ENCODE measurements at regions of chr17 and their contacts with region 1.

Region 1: DNA sequence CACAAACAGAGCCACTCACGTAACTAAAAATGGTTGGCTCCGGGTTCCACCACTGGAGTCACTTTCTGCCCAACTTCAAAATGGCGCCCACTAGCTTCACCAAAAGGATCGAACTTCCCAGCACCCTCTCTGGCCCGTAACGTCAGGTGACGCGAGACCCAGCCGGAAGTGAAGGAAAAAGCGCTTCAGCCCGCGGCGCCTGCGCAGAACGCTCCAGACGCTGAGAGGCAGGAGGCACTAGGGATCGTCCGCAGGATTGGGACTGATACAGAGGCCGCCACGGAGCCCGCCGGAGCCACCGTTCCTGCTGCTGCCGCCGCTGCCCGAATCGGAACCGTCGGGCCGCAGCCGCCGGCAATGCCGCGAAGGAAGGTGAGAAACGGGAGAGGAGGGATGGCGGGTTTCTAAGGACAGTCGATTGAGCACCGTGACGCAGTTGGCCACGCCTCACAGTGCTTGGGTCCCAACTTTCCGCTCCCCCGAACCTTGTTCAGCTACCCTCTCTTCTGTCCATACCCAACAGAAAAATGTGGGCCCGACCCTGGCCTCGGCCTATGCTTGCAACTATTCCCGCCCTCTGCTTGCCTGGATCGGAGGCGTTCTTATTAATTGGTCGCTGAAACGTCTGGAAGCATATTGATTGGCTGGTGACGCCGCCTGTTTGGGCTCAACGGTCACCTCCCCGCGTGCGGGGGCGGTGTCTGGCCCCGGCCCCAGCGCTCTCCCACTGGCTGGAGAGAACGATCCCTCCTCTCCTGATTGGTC is at the start of gene KAT7:
- DNase-seq: peak; percentile 95 to 100 (median 97)
- ATAC-seq: peak; percentile 80
- H3K4me3 ChIP-seq: peak within 1 kb of the TSS; percentile 93
- H3K4me3 Mint-ChIP-seq: peak within 1 kb of the TSS; percentile 100
- H3K27ac ChIP-seq: peak within 1 kb of the TSS; percentile 98 to 99
- H3K27ac Mint-ChIP-seq: peak within 1 kb of the TSS; percentile 96
- H3K4me1 ChIP-seq: peaks cover 34% of the 10 kb centered on the region
- H3K4me1 Mint-ChIP-seq: peaks cover 60% of the 10 kb centered on the region
- H3K27me3 ChIP-seq: no peaks in the 10 kb centered on the region
- H3K27me3 Mint-ChIP-seq: no peaks in the 10 kb centered on the region
- CTCF ChIP-seq: no peak
- total RNA-seq, gene KAT7: 178 to 187 TPM

Region 2: DNA sequence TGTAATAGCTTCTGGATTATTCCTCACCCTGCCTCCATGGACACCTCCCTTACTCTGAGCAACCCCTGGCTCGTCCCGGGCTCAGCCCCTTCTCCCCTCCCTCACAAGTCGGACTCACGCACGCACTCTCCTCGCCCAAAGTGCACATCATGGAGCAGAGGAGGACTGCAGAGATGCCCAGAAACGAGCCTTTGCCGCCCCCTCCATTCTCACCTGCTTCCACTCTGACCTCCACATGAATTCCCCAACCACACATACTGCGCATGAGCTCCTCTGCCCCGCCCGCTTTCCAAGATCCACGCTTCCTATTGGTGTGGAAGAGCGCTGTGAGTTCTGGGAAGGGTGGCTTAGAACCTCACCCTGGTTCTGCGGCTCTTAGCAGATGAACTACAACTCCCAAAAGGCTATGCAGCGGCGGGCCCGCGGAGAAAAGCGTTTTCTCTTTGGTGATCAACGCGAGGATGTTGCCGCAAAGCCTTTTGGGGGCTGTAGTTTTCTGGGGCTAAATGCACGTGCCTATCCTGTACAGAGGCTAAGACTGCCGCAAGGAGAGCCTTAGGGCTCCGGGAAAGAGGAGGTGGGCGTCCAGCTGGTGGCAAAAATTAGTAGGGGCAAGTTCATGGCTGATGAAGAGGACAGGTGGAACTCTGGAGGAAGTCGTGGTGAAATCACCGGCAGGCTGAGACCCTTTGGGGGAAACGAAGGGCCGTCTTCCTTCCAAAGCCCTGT is 373.9 kb before region 1 on chr17 and contains the start of gene PHB1:
- CTCF ChIA-PET with region 1: no interaction called
- POLR2A ChIA-PET with region 1: interaction called, 5 read pairs
- intact Hi-C with region 1: loop called in 1 of 2 experiments (anchors 2 kb)
- DNase-seq: peak; percentile 88 to 99 (median 92)
- ATAC-seq: peak; percentile 98
- H3K4me3 ChIP-seq: peak within 1 kb of the TSS; percentile 87
- H3K4me3 Mint-ChIP-seq: peak within 1 kb of the TSS; percentile 91
- H3K27ac ChIP-seq: peak within 1 kb of the TSS in 1 of 2 donors; percentile 30
- H3K27ac Mint-ChIP-seq: peak within 1 kb of the TSS; percentile 52
- H3K4me1 ChIP-seq: peaks cover 19% of the 10 kb centered on the region
- H3K4me1 Mint-ChIP-seq: peaks cover 16% of the 10 kb centered on the region
- H3K27me3 ChIP-seq: no peaks in the 10 kb centered on the region
- H3K27me3 Mint-ChIP-seq: no peaks in the 10 kb centered on the region
- CTCF ChIP-seq: no peak
- total RNA-seq, gene PHB1: 24.2 to 31.6 TPM

Region 3: DNA sequence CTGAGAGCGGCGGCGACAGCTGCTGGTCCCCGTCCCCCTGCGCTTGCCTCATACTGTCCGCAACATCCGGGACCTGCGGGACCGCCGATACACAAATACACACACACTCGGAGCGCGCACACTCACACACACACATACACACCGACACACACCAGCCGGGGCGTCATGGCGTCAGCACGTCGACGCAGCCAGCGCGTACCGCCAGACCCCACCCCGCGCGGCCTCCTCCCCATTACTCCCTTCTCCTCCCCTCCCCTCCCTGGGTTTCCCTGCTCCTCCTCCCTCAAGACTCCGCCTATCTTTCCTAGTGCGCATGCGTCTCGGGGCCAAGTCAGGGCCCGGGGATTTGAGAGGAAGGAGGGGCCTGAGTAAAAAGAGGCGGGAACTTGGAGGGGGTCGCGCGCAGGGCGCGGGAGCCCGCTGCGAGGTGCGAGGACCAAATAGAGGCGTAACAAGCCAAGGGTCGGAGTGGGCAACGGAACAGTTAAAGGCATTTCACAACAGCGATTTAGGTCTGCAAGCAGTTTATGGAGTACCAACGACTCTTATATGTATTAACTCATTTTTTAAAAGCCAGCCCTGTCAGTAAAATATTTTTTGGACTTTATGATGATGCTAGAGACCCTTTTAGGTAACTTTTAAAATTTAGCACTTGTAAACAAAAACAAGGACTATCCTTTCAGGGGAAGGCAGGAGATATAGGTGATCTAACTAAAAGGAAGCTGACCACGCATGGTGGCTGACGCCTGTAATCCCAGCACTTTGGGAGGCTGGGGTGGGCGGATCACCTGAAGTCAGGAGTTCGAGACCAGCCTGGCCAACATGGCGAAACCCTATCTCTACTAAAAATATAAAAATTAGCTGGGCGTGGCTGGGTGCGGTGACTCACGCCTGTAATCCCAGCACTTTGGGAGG is 110.5 kb before region 1 on chr17 and contains the start of gene SPOP:
- CTCF ChIA-PET with region 1: no interaction called
- POLR2A ChIA-PET with region 1: interaction called, 16 read pairs
- intact Hi-C with region 1: no loop called
- DNase-seq: peak; percentile 98 to 100 (median 99)
- ATAC-seq: peak; percentile 88
- H3K4me3 ChIP-seq: peak within 1 kb of the TSS; percentile 86
- H3K4me3 Mint-ChIP-seq: peak within 1 kb of the TSS; percentile 98
- H3K27ac ChIP-seq: peak within 1 kb of the TSS; percentile 98 to 99
- H3K27ac Mint-ChIP-seq: peak within 1 kb of the TSS; percentile 95
- H3K4me1 ChIP-seq: peaks cover 29% of the 10 kb centered on the region
- H3K4me1 Mint-ChIP-seq: peaks cover 50% of the 10 kb centered on the region
- H3K27me3 ChIP-seq: no peaks in the 10 kb centered on the region
- H3K27me3 Mint-ChIP-seq: peaks cover 5% of the 10 kb centered on the region
- CTCF ChIP-seq: no peak
- total RNA-seq, gene SPOP: 38.7 to 41.5 TPM

Region 4: GRCh38 chr17:49715717-49716279 is 72.9 kb before region 1 on chr17:
- CTCF ChIA-PET with region 1: interaction called, 3 read pairs
- POLR2A ChIA-PET with region 1: interaction called, 13 read pairs
- intact Hi-C with region 1: no loop called
- DNase-seq: peak in 7 of 14 experiments; percentile 20 to 85 (median 39)
- ATAC-seq: peak; percentile 72
- H3K4me3 ChIP-seq: no peak overlapping the region
- H3K4me3 Mint-ChIP-seq: peak overlapping the region; percentile 58
- H3K27ac ChIP-seq: peak overlapping the region; percentile 62 to 86
- H3K27ac Mint-ChIP-seq: peak overlapping the region; percentile 80
- H3K4me1 ChIP-seq: peaks cover 49% of the 10 kb centered on the region
- H3K4me1 Mint-ChIP-seq: peaks cover 34% of the 10 kb centered on the region
- H3K27me3 ChIP-seq: no peaks in the 10 kb centered on the region
- H3K27me3 Mint-ChIP-seq: no peaks in the 10 kb centered on the region
- CTCF ChIP-seq: no peak

Region 5: DNA sequence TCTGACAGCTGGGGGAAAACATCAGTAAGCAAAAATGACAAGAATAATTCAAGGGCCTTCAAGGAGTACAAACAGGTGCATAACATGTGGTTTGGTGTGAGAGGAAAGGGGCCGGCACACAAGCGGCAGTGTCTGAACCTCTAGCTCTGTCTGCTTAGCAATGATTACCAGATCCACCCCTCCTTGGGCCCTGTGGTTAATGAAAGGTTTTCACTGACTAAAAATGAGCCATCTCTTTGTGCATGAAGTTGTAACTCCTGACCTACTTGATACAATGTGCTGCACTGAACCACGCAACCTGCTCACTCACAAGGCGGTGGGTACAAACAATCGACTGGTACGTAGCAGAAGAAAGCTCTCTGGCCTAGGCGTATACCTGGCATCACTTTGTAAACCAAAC is 39.9 kb before region 1 on chr17:
- CTCF ChIA-PET with region 1: interaction called, 3 read pairs
- POLR2A ChIA-PET with region 1: interaction called, 44 read pairs
- intact Hi-C with region 1: no loop called
- DNase-seq: peak; percentile 25 to 87 (median 52)
- ATAC-seq: peak; percentile 76
- H3K4me3 ChIP-seq: no peak overlapping the region
- H3K4me3 Mint-ChIP-seq: peak overlapping the region; percentile 72
- H3K27ac ChIP-seq: peak overlapping the region; percentile 87 to 94
- H3K27ac Mint-ChIP-seq: peak overlapping the region; percentile 97
- H3K4me1 ChIP-seq: peaks cover 90% of the 10 kb centered on the region
- H3K4me1 Mint-ChIP-seq: peaks cover 77% of the 10 kb centered on the region
- H3K27me3 ChIP-seq: no peaks in the 10 kb centered on the region
- H3K27me3 Mint-ChIP-seq: no peaks in the 10 kb centered on the region
- CTCF ChIP-seq: no peak

Region 6: DNA sequence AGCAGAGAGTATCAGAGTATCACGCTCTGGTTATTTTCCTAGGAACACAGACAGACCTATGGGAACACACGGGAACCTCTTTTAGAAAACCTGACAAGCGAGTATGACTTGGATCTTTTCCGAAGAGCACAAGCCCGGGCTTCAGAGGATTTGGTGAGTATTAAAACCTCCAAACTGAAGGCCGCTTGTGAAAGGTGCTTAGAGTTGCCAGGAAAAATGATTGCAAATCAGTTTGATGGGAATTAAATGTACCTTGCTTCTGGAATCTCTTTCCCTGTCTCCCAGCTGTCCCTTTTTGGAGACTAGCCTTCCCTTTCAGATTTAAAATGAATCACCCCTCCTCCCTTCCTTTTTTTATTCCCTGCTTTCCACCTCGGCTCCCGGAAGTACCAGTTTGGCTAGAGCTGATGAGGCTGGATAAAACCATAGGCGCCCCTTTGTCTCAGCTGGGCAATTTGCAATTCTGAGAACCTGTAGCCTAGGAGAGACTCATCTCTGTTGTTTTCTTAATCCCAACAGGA is 27.2 kb after region 1 on chr17:
- CTCF ChIA-PET with region 1: no interaction called
- POLR2A ChIA-PET with region 1: interaction called, 16 read pairs
- intact Hi-C with region 1: loop called in 1 of 2 experiments (anchors 1 kb)
- DNase-seq: no peak
- ATAC-seq: no peak
- H3K4me3 ChIP-seq: no peak overlapping the region
- H3K4me3 Mint-ChIP-seq: no peak overlapping the region
- H3K27ac ChIP-seq: peak overlapping the region in 1 of 2 donors; percentile 43
- H3K27ac Mint-ChIP-seq: peak overlapping the region; percentile 96
- H3K4me1 ChIP-seq: peaks cover 51% of the 10 kb centered on the region
- H3K4me1 Mint-ChIP-seq: peaks cover 73% of the 10 kb centered on the region
- H3K27me3 ChIP-seq: no peaks in the 10 kb centered on the region
- H3K27me3 Mint-ChIP-seq: no peaks in the 10 kb centered on the region
- CTCF ChIP-seq: no peak

Measured in CD4-positive, alpha-beta T cell (primary cell).